ENCODE measurements at regions of chr14 and their contacts with region 1.

Region 1: DNA sequence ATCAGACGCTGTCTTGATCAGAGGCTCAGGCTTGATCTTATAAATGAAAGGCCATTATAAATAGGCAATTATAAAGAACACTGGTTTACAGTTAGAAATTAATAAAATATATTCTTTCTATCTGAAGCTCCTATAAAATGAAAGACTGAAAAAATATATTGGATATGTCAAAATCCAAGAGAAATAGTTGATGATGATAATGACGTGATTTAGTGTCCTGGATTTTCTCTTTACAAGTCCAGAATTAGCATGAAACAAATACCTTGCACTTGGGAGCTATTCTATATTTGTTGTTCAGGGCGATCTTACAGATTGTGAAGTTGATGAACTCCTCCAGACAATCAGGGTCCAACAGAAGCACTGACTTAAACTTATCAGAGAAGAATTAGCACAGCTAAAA is 370.1 kb upstream of the MDGA2 start:
- DNase-seq: no peak
- ATAC-seq: no peak
- H3K4me3 ChIP-seq: no peak overlapping the region
- H3K4me3 Mint-ChIP-seq: no peak overlapping the region
- H3K27ac ChIP-seq: no peak overlapping the region
- H3K27ac Mint-ChIP-seq: no peak overlapping the region
- H3K4me1 ChIP-seq: no peaks in the 10 kb centered on the region
- H3K4me1 Mint-ChIP-seq: no peaks in the 10 kb centered on the region
- H3K27me3 ChIP-seq: no peaks in the 10 kb centered on the region
- H3K27me3 Mint-ChIP-seq: no peaks in the 10 kb centered on the region

Region 2: DNA sequence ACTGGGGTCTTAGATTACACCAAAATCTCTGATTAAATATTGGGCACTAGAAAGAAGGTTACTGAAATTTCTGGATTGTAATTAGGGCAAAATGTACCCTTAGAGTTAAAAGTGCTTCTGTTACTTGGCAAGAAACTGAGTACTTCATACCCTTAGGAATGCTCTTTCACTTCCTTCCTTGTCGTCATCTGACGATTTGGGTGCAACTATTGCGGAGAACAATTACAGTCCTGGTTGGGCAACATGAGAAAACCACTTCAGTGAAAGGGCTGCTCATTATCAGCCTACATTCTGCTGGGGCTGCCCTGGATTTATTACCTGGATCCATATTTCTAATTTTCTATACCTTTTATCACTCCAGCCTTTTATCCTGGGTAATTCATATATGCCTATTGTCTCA is 21.7 kb before region 1 on chr14:
- CTCF ChIA-PET with region 1: no interaction called
- POLR2A ChIA-PET with region 1: no interaction called
- intact Hi-C with region 1: no loop called
- DNase-seq: no peak
- ATAC-seq: no peak
- H3K4me3 ChIP-seq: no peak overlapping the region
- H3K4me3 Mint-ChIP-seq: no peak overlapping the region
- H3K27ac ChIP-seq: no peak overlapping the region
- H3K27ac Mint-ChIP-seq: no peak overlapping the region
- H3K4me1 ChIP-seq: no peaks in the 10 kb centered on the region
- H3K4me1 Mint-ChIP-seq: no peaks in the 10 kb centered on the region
- H3K27me3 ChIP-seq: no peaks in the 10 kb centered on the region
- H3K27me3 Mint-ChIP-seq: no peaks in the 10 kb centered on the region

Region 3: DNA sequence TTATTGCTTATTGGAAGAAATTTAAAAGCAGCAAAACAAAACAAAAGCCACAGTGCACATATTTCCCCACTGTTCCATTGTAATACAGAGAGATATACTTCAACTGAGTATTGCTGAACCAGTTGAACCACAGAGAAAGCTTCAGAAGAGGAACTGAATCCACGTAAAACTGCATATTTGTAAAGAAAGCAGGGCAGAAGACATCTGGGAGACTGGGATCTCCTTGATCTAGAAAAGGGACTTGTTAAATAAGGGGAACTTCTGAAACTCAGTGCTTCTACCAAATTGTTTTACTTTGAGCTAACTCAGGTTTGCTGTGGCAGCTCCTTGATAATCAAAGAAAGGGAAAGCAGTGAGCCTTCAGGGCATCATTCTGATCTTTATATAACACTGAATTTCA is 41.0 kb after region 1 on chr14:
- CTCF ChIA-PET with region 1: no interaction called
- POLR2A ChIA-PET with region 1: no interaction called
- intact Hi-C with region 1: loop called in 1 of 2 experiments (anchors 1 kb)
- DNase-seq: no peak
- ATAC-seq: no peak
- H3K4me3 ChIP-seq: no peak overlapping the region
- H3K4me3 Mint-ChIP-seq: no peak overlapping the region
- H3K27ac ChIP-seq: no peak overlapping the region
- H3K27ac Mint-ChIP-seq: no peak overlapping the region
- H3K4me1 ChIP-seq: no peaks in the 10 kb centered on the region
- H3K4me1 Mint-ChIP-seq: no peaks in the 10 kb centered on the region
- H3K27me3 ChIP-seq: no peaks in the 10 kb centered on the region
- H3K27me3 Mint-ChIP-seq: no peaks in the 10 kb centered on the region

Measured in naive thymus-derived CD4-positive, alpha-beta T cell (primary cell).